Activated CD8-positive, alpha-beta T cell treated with anti-CD3 and anti-CD28 coated beads for 36 hours (primary cell): ENCODE measurements at regions of chr1 and their contacts with region 1.

Region 1: GRCh38 chr1:161292631-161293030 is 17.1 kb downstream of the MPZ start:
- DNase-seq: no peak
- ATAC-seq: no peak
- H3K4me3 Mint-ChIP-seq: no peak overlapping the region
- H3K27ac Mint-ChIP-seq: no peak overlapping the region
- H3K4me1 Mint-ChIP-seq: no peaks in the 10 kb centered on the region
- H3K27me3 Mint-ChIP-seq: no peaks in the 10 kb centered on the region
- CTCF ChIP-seq: no peak

Region 2: GRCh38 chr1:161250829-161251228 is 41.8 kb before region 1 on chr1:
- CTCF ChIA-PET with region 1: interaction called, 22 read pairs
- POLR2A ChIA-PET with region 1: no interaction called
- intact Hi-C with region 1: no loop called
- DNase-seq: no peak
- ATAC-seq: no peak
- H3K4me3 Mint-ChIP-seq: no peak overlapping the region
- H3K27ac Mint-ChIP-seq: no peak overlapping the region
- H3K4me1 Mint-ChIP-seq: no peaks in the 10 kb centered on the region
- H3K27me3 Mint-ChIP-seq: peaks cover 4% of the 10 kb centered on the region
- CTCF ChIP-seq: no peak

Region 3: GRCh38 chr1:161427733-161428516 is 135.3 kb after region 1 on chr1:
- CTCF ChIA-PET with region 1: no interaction called
- POLR2A ChIA-PET with region 1: no interaction called
- intact Hi-C with region 1: no loop called
- DNase-seq: peak; percentile 56
- ATAC-seq: peak; percentile 69
- H3K4me3 Mint-ChIP-seq: peak overlapping the region; percentile 60
- H3K27ac Mint-ChIP-seq: no peak overlapping the region
- H3K4me1 Mint-ChIP-seq: peaks cover 8% of the 10 kb centered on the region
- H3K27me3 Mint-ChIP-seq: peaks cover 30% of the 10 kb centered on the region
- CTCF ChIP-seq: no peak